ENCODE measurements at regions of chr4 and their contacts with region 1.

Region 1: GRCh38 chr4:9762823-9763475 is 18.5 kb upstream of the DRD5 start:
- ATAC-seq: peak in 4 of 8 experiments; percentile 18 to 71 (median 44)
- H3K4me3 ChIP-seq: no peak overlapping the region
- H3K27ac ChIP-seq: no peak overlapping the region
- H3K4me1 ChIP-seq: no peaks in the 10 kb centered on the region

Region 2: GRCh38 chr4:8709729-8710360 is 1053.1 kb before region 1 on chr4:
- in situ Hi-C with region 1: no loop called
- ATAC-seq: no peak
- H3K4me3 ChIP-seq: no peak overlapping the region
- H3K27ac ChIP-seq: no peak overlapping the region
- H3K4me1 ChIP-seq: peaks cover 0 to 7% of the 10 kb centered on the region in 2 donors

Region 3: GRCh38 chr4:9898596-9899305 is 135.8 kb after region 1 on chr4:
- in situ Hi-C with region 1: loop called in 1 of 9 experiments (anchors 10 kb)
- ATAC-seq: peak; percentile 82 to 99 (median 97)
- H3K4me3 ChIP-seq: no peak overlapping the region
- H3K27ac ChIP-seq: no peak overlapping the region
- H3K4me1 ChIP-seq: peaks cover 8 to 16% of the 10 kb centered on the region in 2 donors

Region 4: DNA sequence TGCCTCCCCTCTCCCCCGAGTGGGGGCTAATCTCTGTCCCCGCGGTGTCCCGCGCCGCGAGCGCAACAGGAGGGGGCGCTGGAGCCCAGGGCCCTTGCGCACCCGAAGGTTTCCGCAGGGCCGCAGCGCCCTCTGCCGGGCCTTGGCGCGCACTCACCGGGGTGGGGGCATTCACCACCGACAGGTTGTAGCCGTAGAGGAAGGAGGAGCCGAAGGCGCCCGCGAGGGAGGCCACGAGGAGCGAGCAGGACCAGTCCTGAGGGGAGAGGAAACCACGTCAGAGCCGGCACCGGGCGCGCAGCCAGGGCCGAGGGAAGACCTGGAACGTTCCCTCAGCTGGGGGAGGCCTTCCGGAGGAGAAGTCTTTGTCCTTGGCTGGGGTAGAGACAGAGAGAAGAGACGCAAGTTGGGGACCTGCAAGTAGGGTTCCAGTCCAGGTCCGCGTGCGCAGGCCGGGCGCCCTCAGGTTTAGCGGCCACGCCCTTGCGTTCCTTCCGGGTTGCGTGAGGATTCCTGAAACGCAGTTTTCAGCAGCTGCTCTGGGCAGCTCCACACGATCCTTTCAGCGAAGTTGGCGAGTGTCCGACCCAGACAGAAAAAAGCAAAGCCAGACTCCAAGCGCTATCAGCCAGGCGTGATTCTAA is 256.0 kb after region 1 on chr4:
- in situ Hi-C with region 1: loop called in 3 of 9 experiments (anchors 10 to 25 kb)
- ATAC-seq: peak in 7 of 8 experiments; percentile 16 to 99 (median 57)
- H3K4me3 ChIP-seq: no peak overlapping the region
- H3K27ac ChIP-seq: no peak overlapping the region
- H3K4me1 ChIP-seq: peaks cover 7 to 8% of the 10 kb centered on the region in 2 donors

Region 5: DNA sequence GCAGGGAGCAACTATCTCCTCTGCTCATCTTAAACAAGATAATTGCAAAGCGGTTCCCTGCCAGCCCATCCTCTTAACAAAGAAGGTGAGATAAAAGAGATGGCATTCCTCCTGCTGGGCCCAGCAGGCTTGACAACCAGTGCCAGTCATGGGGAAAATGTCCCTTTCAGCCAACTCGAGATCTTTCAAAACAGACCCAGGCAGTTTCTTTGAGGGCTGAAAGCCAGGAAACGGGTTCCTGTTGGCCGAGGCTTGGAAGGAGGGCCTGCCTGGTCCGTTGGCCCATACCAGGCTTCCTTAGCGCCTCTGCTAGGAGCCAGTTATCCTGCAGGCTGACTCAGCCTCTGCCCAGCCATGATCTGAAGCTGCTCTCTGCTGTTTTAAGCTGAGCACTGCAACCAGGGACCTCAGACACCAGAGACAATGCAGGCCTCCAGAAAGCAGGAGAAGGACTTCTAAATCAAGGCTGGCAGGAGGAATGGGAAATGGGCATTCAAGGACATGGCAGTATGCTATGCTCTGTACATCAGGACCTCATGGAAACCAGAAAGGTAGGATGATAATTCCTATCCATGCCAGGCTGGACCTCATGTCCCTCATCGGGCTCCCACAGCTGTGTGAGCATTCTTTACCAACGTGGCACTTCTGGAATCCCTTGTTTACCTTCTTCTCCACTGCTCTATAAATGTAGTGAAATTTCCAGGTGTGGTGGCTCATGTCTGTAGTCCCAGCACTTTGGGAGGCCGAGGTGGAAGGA is 300.8 kb after region 1 on chr4:
- in situ Hi-C with region 1: loop called in 1 of 9 experiments (anchors 25 kb)
- ATAC-seq: peak; percentile 94 to 99 (median 98)
- H3K4me3 ChIP-seq: no peak overlapping the region
- H3K27ac ChIP-seq: no peak overlapping the region
- H3K4me1 ChIP-seq: peaks cover 4 to 5% of the 10 kb centered on the region in 2 donors